ENCODE measurements at regions of chr19 and their contacts with region 1.

Region 1: DNA sequence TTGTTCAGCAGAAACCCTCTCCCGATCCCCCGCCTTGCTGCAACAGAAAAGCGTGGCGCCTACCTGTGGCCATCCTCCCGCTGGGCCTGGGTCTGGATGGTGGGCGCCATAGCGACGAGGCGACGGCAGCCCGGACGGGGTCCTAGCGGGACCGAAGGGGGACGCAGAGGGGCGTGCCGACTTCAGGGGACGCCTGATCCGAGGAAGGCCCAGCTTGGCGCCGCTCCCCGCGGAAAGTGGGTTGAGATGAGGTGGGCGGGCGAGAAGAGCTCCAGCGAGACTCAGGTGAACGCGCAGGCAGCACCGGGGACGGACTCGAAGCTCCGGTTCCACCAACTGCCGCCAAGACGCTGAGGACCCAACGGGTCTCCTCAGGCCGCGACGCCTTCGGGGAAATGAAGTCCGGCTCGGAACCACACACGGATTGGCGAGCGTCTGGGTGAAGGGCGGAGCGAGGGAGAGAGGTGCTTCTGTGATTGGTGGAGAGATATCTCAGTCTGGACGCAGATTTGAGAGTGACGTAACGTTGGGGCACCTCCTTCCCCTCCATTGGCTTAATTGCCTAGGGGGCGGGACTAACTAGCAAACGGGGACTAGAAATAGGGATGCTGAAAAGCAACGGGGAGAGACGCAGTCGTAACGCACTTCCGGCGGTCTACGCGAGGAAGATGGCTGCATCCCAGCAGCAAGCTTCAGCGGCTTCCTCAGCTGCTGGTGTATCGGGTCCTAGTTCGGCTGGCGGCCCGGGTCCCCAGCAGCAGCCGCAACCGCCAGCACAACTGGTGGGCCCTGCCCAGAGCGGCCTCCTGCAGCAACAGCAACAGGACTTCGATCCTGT is at the starts of genes MED29 and PAF1:
- DNase-seq: peak; percentile 95
- H3K4me3 Mint-ChIP-seq: peak within 1 kb of the TSS; percentile 98
- H3K27ac Mint-ChIP-seq: peak within 1 kb of the TSS; percentile 93
- H3K4me1 Mint-ChIP-seq: peaks cover 31% of the 10 kb centered on the region
- H3K27me3 Mint-ChIP-seq: no peaks in the 10 kb centered on the region
- total RNA-seq, gene MED29: 37.5 and 45.8 TPM in 2 replicates
- total RNA-seq, gene PAF1: 54.8 and 57.3 TPM in 2 replicates

Region 2: DNA sequence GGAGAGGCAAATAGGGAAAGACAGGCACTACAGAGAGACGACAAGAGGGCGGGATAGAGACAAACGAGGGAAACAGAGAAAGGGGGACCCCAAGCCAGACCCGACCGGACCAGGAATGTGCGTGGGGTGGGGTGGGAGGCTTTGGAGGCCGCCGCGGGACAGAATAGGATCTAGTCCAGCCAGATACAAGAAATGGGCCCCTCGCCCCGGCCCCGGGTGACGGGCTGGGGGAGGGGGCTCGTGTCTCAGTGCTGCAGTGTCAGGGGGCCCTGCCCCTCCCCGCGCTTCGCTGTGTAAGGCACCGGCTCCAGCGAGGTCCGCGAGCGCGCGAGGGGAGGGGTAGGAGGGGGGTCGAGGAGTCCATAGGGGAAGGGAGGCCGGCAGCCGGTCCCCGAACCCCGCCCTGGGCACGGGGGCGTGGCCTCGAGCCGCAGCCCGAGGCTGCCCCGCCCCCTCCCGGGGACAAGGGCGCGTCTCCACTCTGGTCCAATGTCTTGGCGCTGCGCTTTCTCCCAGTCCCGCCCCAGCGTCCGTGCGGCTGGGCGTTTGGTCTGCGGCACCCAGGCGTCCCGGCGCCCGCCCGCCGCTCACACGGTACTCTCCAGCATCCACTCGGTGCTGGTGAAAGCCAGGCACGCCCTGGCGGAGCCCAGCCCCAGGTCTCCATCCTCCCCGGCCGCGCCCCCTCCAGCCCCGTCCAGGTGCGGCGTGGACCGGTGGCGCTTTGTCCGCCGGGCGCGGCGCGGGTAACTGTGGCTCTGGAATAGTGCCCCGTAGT is 83.7 kb before region 1 on chr19:
- intact Hi-C with region 1: no loop called
- DNase-seq: no peak
- H3K4me3 Mint-ChIP-seq: no peak overlapping the region
- H3K27ac Mint-ChIP-seq: no peak overlapping the region
- H3K4me1 Mint-ChIP-seq: peaks cover 17% of the 10 kb centered on the region
- H3K27me3 Mint-ChIP-seq: no peaks in the 10 kb centered on the region

Region 3: GRCh38 chr19:39341719-39342604 is 49.0 kb before region 1 on chr19 and contains the start of gene SAMD4B:
- intact Hi-C with region 1: loop called (anchors 1 kb)
- DNase-seq: peak; percentile 99
- H3K4me3 Mint-ChIP-seq: peak within 1 kb of the TSS; percentile 99
- H3K27ac Mint-ChIP-seq: peak within 1 kb of the TSS; percentile 96
- H3K4me1 Mint-ChIP-seq: peaks cover 73% of the 10 kb centered on the region
- H3K27me3 Mint-ChIP-seq: no peaks in the 10 kb centered on the region
- total RNA-seq, gene SAMD4B: 71.3 and 71.8 TPM in 2 replicates

Region 4: DNA sequence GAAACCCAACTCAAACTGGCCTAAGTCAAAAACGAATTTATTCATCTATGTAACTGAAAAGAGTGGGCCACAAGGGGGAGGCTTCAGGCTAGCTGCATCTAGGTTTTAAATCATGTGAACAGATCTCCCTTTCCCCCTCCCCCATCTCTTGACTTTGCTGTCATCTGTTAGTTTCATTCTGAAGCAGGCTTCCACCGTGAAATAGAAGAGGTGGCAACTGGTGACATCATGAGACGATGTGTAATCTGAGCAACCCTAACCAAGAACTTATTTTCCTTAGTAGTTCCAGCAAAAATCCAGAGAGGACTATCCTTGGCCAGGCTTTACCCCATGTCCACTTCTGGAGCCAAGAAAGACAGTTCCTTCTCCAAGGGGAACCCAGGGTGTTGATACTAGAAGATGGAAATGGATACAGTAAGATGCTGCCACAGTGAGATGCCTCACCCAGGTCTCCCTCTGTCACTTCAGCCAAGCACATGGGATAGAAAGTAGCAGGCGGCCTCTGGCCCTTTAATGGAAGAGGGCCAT is 39.4 kb before region 1 on chr19:
- intact Hi-C with region 1: loop called (anchors 1 kb)
- DNase-seq: peak; percentile 61
- H3K4me3 Mint-ChIP-seq: peak overlapping the region; percentile 32
- H3K27ac Mint-ChIP-seq: peak overlapping the region; percentile 87
- H3K4me1 Mint-ChIP-seq: peaks cover 51% of the 10 kb centered on the region
- H3K27me3 Mint-ChIP-seq: no peaks in the 10 kb centered on the region

Region 5: DNA sequence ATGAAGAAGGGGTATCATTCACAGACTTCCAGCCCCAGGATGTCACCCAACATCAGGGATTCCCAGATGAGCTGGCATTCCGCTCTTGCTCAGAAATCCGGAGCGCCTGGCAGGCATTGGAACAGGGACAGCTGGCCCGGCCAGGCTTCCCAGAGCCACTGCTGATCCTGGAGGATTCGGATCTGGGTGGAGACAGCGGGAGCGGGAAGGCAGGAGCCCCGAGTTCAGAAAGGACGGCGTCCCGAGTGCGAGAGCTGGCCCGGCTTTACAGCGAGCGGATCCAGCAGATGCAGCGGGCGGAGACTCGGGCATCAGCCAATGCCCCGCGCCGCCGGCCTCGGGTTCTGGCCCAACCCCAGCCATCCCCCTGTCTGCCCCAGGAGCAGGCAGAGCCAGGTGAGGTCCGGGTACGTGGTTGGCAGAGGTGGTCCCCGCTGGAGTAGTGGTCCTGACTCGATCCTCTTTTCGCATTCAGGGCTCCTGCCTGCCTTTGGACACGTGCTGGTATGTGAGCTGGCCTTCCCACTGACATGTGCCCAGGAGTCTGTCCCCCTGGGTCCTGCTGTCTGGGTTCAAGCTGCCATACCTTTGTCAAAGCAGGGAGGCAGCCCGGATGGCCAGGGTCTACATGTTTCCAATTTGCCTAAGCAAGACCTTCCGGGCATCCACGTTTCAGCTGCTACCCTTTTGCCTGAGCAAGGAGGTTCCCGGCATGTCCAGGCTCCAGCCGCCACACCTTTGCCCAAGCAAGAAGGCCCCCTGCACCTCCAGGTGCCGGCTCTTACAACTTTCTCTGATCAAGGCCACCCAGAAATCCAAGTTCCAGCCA is 32.5 kb after region 1 on chr19:
- intact Hi-C with region 1: no loop called
- DNase-seq: no peak
- H3K4me3 Mint-ChIP-seq: no peak overlapping the region
- H3K27ac Mint-ChIP-seq: no peak overlapping the region
- H3K4me1 Mint-ChIP-seq: no peaks in the 10 kb centered on the region
- H3K27me3 Mint-ChIP-seq: no peaks in the 10 kb centered on the region